HEK293T (cell line): ENCODE measurements at regions of chr2 and their contacts with region 1.

Region 1: GRCh38 chr2:127415593-127416505 is 2.4 kb upstream of the PROC start:
- DNase-seq: peak; percentile 84

Region 2: DNA sequence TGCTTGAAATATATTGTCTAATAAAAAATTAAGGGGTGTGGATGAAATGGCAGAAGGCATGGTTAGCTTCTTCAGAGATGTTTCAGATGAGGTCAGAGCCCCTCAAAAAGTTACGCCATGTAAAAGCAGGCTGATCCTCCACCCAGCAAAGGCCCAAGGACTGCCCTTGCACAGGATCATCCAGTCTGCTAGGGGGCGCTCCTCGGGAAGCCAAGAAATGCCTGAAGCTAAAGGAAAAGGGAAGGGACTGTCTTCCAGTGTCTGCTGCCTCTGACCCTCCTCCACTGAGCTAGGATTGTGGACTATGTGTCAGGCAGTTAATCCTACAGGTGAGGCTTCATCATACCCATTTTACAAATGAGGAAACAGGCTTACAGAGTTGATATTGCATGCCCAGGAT is 551.0 kb before region 1 on chr2:
- CTCF ChIA-PET with region 1: no interaction called
- POLR2A ChIA-PET with region 1: no interaction called
- DNase-seq: no peak

Region 3: DNA sequence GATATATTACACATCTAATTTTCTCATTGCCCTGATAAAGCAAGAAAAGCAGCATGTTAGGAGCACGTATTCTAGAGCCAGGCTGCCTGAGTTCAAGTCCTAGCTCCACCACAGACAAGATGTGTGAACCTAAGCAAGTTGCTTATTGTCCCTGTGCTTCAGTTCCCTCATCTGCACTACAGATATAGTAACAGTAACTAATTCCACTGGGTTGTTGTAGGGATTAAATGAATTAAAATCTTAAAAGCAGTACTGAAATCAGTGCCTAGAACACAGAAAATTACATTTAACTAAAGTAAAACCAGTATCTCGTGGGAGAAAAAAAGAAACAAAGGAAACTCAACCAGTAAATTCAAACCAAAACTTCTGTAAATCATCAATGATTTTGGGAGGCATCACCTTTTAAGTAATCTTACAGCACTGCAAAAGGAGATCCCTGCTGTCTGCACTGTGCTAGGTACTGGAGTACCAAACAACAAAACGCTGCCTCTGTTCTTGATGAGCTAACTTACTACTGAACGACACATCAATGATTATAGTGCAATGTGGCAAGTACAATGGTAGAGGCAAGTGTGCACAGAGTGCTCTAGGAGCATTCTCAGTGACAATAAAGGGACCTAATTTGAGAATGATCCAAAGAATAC is 36.0 kb before region 1 on chr2:
- CTCF ChIA-PET with region 1: interaction called, 12 read pairs
- POLR2A ChIA-PET with region 1: no interaction called
- DNase-seq: no peak

Region 4: GRCh38 chr2:127426501-127427352 is 10.9 kb after region 1 on chr2:
- CTCF ChIA-PET with region 1: interaction called, 11 read pairs
- POLR2A ChIA-PET with region 1: interaction called, 7 read pairs
- DNase-seq: no peak

Region 5: DNA sequence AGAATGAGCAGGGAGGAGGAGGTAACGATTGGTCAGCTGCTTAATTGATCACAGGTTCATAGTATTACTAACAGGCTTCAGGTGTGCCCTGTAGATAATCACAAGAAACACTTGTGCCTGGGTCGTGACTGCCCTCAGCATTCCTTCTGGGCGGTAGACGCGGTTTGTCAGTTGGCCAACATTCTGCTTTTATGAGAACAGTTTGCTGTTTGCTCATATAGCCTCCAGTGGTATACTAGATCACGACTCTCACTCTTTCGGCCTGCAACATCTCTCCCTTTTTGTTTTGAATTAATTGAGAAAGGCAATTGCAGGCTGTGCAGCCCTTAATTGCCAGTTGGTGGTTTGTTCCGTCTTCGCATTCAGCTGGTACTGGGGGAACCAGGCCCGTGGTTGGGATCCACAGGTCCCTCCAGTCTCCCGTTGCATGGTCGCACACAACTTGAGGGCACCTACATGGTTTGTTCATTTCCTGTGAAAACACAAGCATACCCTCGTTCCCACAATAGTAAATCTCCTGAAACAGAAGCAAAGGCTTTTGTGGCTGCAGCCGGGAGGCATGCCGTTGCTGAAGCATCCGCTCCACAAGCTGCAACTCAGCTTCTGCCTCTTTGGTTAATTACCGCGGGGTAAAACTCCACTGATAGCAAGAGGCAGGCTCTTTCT is 199.8 kb after region 1 on chr2:
- CTCF ChIA-PET with region 1: no interaction called
- POLR2A ChIA-PET with region 1: no interaction called
- DNase-seq: no peak